Activated CD8-positive, alpha-beta T cell treated with anti-CD3 and anti-CD28 coated beads for 36 hours (primary cell): ENCODE measurements at regions of chr1 and their contacts with region 1.

Region 1: GRCh38 chr1:156383023-156383422 is 14.0 kb downstream of the RHBG start:
- DNase-seq: peak; percentile 79
- ATAC-seq: peak; percentile 92
- H3K4me3 Mint-ChIP-seq: no peak overlapping the region
- H3K27ac Mint-ChIP-seq: no peak overlapping the region
- H3K4me1 Mint-ChIP-seq: peaks cover 4% of the 10 kb centered on the region
- H3K27me3 Mint-ChIP-seq: peaks cover 14% of the 10 kb centered on the region
- CTCF ChIP-seq: peak; percentile 82

Region 2: DNA sequence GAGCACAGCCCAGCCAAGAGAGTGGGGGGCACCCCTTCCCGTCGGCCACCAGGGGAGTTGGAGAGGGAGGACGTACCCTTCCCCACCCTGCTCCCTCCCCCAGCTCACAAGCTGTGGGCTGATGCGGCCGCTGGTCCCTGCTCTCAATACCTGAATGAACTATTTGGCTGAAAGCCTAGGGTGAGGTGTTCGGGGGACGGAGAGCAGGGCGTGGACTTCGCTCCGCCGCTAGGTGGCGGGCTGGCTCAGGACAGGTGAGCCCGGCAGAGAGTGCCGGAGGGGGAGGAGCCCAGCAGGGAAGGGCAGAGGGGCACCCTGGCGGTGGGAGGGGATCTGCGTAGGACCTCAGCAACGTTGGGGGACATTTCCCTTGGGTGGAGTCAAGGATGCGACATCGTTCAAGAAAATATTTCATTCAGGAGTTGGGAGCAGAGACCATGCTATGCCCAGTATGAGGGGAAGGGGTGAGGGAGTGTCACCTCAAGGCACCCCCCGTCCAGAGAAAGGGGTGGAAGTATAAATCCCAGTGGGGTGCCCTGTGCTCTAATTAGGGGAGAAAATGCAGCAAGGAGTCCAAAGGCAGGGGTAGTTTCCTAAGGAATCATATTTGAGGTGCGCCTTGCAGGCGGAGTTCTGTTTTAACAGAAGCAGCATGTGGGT is 26.0 kb before region 1 on chr1:
- CTCF ChIA-PET with region 1: interaction called, 70 read pairs
- POLR2A ChIA-PET with region 1: no interaction called
- intact Hi-C with region 1: no loop called
- DNase-seq: peak; percentile 74
- ATAC-seq: peak; percentile 100
- H3K4me3 Mint-ChIP-seq: no peak overlapping the region
- H3K27ac Mint-ChIP-seq: no peak overlapping the region
- H3K4me1 Mint-ChIP-seq: peaks cover 8% of the 10 kb centered on the region
- H3K27me3 Mint-ChIP-seq: peaks cover 19% of the 10 kb centered on the region
- CTCF ChIP-seq: peak; percentile 84

Region 3: DNA sequence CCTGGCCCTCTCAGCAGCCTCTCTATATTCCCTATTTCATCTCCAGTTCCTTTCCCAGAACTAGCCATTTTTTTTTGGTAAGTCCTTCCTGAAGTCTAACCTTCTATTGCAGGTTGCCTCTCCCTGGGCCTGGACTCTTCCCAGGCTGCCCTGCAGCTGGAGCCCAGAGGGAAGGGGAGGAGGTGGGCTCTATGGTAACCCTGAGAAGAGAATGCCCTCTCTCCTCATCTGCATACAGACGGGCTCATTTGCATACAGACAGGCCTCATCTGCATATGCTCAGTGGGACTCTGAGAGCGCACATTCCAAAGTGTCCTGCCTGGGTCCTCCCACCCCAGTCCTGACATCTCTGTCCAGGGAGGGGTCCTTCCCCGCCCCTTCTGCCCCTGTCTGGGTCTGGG is 18.7 kb after region 1 on chr1:
- CTCF ChIA-PET with region 1: interaction called, 51 read pairs
- POLR2A ChIA-PET with region 1: interaction called, 3 read pairs
- intact Hi-C with region 1: no loop called
- DNase-seq: no peak
- ATAC-seq: no peak
- H3K4me3 Mint-ChIP-seq: no peak overlapping the region
- H3K27ac Mint-ChIP-seq: no peak overlapping the region
- H3K4me1 Mint-ChIP-seq: no peaks in the 10 kb centered on the region
- H3K27me3 Mint-ChIP-seq: peaks cover 11% of the 10 kb centered on the region
- CTCF ChIP-seq: no peak

Region 4: DNA sequence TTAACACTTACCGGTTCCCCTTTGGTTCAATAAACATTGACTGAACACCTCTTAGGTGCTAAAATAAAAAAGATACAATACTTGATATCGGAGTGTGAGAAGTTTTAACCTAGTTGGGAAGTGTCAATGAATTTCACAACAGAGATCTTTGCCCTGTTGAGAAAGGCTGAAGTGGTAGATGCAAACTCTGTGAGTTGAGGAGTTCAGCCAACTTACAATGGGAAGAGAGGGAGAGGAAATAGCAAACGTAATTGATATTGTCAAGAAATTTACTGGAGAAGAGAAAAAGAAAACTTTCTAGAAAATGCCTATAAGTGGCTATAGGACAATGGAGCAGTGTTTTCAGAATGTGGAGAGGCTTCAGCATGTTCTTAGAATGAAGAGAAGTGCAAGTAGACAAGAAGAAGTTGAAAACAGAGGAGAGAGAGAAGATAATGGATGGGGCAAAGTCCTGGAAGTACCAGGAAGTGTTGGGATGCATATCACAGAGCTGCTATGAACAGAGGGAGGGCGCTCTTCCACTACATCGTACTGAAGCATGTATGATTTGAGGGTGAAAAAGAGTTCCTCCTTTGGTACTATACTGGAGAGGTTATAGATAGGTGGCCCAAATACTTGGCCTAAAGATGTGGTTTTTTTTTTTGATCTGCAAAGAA is 68.6 kb after region 1 on chr1:
- CTCF ChIA-PET with region 1: interaction called, 420 read pairs
- POLR2A ChIA-PET with region 1: interaction called, 10 read pairs
- intact Hi-C with region 1: no loop called
- DNase-seq: no peak
- ATAC-seq: no peak
- H3K4me3 Mint-ChIP-seq: no peak overlapping the region
- H3K27ac Mint-ChIP-seq: no peak overlapping the region
- H3K4me1 Mint-ChIP-seq: peaks cover 14% of the 10 kb centered on the region
- H3K27me3 Mint-ChIP-seq: peaks cover 8% of the 10 kb centered on the region
- CTCF ChIP-seq: no peak

Region 5: GRCh38 chr1:156601122-156601830 is 218.3 kb after region 1 on chr1 and contains the start of gene GPATCH4:
- CTCF ChIA-PET with region 1: interaction called, 23 read pairs
- POLR2A ChIA-PET with region 1: no interaction called
- intact Hi-C with region 1: loop called (anchors 5 kb)
- DNase-seq: peak; percentile 91
- ATAC-seq: peak; percentile 77
- H3K4me3 Mint-ChIP-seq: peak within 1 kb of the TSS; percentile 93
- H3K27ac Mint-ChIP-seq: peak within 1 kb of the TSS; percentile 97
- H3K4me1 Mint-ChIP-seq: peaks cover 32% of the 10 kb centered on the region
- H3K27me3 Mint-ChIP-seq: no peaks in the 10 kb centered on the region
- CTCF ChIP-seq: no peak
- total RNA-seq, gene GPATCH4: 50.7 to 51.0 TPM

Region 6: GRCh38 chr1:156641761-156642264 is 258.8 kb after region 1 on chr1 and contains the start of gene BCAN:
- CTCF ChIA-PET with region 1: interaction called, 17 read pairs
- POLR2A ChIA-PET with region 1: no interaction called
- intact Hi-C with region 1: no loop called
- DNase-seq: peak; percentile 41
- ATAC-seq: peak; percentile 26
- H3K4me3 Mint-ChIP-seq: peak within 1 kb of the TSS; percentile 10
- H3K27ac Mint-ChIP-seq: no peak within 1 kb of the TSS
- H3K4me1 Mint-ChIP-seq: peaks cover 20% of the 10 kb centered on the region
- H3K27me3 Mint-ChIP-seq: peaks cover 78% of the 10 kb centered on the region
- CTCF ChIP-seq: no peak
- total RNA-seq, gene BCAN: not detected